Sigmoid colon (tissue), 7 donors: ENCODE measurements at regions of chr5 and their contacts with region 1.

Region 1: DNA sequence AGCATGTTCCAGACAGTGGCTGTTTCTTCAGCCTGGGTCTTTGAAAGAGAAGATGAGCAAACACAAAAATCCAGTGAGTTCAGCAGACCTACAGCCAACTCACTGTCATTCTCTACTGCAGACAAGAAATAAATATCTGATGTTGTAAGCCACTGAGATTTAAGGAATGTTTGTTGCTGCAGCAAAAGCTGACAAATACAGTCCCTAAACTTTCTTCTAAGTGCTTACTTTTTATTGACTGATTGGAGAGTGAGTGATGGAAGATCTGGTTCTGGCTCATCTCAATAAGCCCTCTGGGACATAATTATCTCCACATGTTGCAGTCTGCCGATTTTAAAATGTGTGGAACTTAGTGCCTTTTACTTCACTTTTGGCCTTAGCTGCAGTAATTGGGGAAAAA is 69.9 kb upstream of the LMNB1 start:
- DNase-seq: no peak
- H3K4me3 ChIP-seq: no peak overlapping the region
- H3K27ac ChIP-seq: no peak overlapping the region
- H3K4me1 ChIP-seq: no peaks in the 10 kb centered on the region
- H3K27me3 ChIP-seq: no peaks in the 10 kb centered on the region
- CTCF ChIP-seq: no peak
- EP300 ChIP-seq: no peak
- POLR2A ChIP-seq: no peak

Region 2: GRCh38 chr5:126054577-126055347 is 652.3 kb before region 1 on chr5:
- intact Hi-C with region 1: no loop called
- DNase-seq: no peak
- H3K4me3 ChIP-seq: no peak overlapping the region
- H3K27ac ChIP-seq: no peak overlapping the region
- H3K4me1 ChIP-seq: no peaks in the 10 kb centered on the region
- H3K27me3 ChIP-seq: no peaks in the 10 kb centered on the region
- CTCF ChIP-seq: no peak
- EP300 ChIP-seq: no peak
- POLR2A ChIP-seq: no peak

Region 3: DNA sequence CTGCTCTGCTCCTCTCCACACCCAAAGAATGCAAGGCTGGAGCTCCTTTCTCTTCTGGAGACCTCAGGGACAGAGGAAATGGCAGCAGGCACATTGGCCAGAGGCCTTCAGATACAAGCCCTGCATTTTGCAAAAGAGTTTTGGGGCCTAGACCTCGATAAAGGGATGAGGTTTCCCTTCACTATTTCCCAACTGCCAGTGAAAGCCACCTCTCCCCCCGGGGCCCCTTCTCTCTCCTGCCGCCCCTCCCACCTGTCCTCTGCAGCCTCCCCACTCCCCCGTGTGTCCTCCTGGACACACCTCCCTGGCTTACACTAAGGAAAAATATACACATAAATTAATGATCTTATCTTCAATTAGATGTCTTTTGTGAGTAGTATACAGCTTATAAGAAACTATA is 48.5 kb after region 1 on chr5:
- intact Hi-C with region 1: loop called (anchors 2 kb)
- DNase-seq: no peak
- H3K4me3 ChIP-seq: no peak overlapping the region
- H3K27ac ChIP-seq: no peak overlapping the region
- H3K4me1 ChIP-seq: no peaks in the 10 kb centered on the region
- H3K27me3 ChIP-seq: no peaks in the 10 kb centered on the region
- CTCF ChIP-seq: no peak
- EP300 ChIP-seq: no peak
- POLR2A ChIP-seq: no peak

Region 4: GRCh38 chr5:127766676-127767340 is 1059.7 kb after region 1 on chr5:
- intact Hi-C with region 1: no loop called
- DNase-seq: no peak
- H3K4me3 ChIP-seq: no peak overlapping the region
- H3K27ac ChIP-seq: no peak overlapping the region
- H3K4me1 ChIP-seq: peaks cover 0 to 16% (median 12%) of the 10 kb centered on the region in 4 donors
- H3K27me3 ChIP-seq: no peaks in the 10 kb centered on the region
- CTCF ChIP-seq: no peak
- EP300 ChIP-seq: no peak
- POLR2A ChIP-seq: no peak